Dorsolateral prefrontal cortex (tissue), 120 donors: ENCODE measurements at regions of chr15 and their contacts with region 1.

Region 1: DNA sequence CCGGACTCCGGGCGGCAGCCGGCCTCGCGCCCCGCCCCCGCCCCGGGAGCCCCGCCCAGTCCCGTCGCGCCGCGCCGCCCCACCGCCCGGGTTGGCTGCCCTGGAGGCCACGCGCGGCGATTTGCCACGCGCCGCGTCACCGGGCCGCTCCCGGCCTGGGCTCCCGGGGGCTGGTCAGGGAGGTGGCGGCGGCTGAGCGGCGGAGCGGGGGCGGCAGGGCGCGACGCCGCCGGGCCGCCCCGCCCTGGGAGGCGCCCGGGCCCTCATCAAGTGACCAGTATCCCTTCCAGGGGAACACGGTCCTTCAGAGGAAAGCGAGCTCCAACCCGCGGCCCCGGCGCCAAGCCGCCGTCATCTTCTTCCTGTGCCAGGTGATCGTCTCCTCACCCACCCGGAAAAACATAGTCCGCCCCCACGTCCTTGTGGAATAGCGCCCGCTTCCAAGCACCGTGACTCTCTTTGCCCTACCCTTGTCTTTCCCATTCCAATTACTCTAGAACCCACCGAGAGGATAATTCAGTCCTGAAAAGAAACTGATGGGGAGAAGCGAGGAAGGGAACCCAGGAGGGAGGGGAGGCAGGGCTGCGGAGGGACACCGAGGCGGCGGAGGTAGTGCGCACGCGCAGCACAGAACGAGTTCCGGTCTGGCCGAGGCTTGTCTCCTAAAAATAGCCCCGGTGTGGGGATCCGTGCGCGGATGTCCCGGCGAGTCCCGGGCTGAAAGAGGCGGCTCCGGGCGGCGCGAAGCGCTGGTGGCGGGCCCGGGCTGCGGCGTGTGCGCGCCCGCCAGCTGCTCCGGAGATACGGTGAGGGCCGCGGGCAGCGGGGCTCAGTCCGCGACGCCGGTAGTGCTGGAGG is at the start of gene MEF2A:
- DNase-seq: peak; percentile 85 to 93 (median 91)
- H3K4me3 ChIP-seq: peak within 1 kb of the TSS; percentile 49 to 95 (median 84)
- H3K27ac ChIP-seq: peak within 1 kb of the TSS; percentile 93 to 100 (median 99)
- H3K27me3 ChIP-seq: no peaks in the 10 kb centered on the region
- CTCF ChIP-seq: peak in 4 of 56 donors; percentile 10 to 19 (median 12)
- total RNA-seq, gene MEF2A: 54.3 to 131 (median 97.1) TPM

Region 2: GRCh38 chr15:99104788-99105513 is 460.6 kb before region 1 on chr15 and contains the start of gene SYNM:
- intact Hi-C with region 1: loop called in 1 of 2 experiments (anchors 10 kb)
- DNase-seq: peak; percentile 20 to 90 (median 73)
- H3K4me3 ChIP-seq: peak within 1 kb of the TSS; percentile 53 to 83 (median 74)
- H3K27ac ChIP-seq: peak within 1 kb of the TSS in 57 of 59 donors; percentile 41 to 97 (median 86)
- H3K27me3 ChIP-seq: no peaks in the 10 kb centered on the region
- CTCF ChIP-seq: peak; percentile 50 to 98 (median 86)
- total RNA-seq, gene SYNM: 54.7 to 162 (median 78.7) TPM

Region 3: GRCh38 chr15:99414755-99415731 is 150.5 kb before region 1 on chr15:
- intact Hi-C with region 1: loop called in 1 of 2 experiments (anchors 2 kb)
- DNase-seq: peak in 7 of 10 donors; percentile 30 to 84 (median 61)
- H3K4me3 ChIP-seq: no peak overlapping the region
- H3K27ac ChIP-seq: peak overlapping the region in 48 of 59 donors; percentile 6 to 83 (median 64)
- H3K27me3 ChIP-seq: no peaks in the 10 kb centered on the region
- CTCF ChIP-seq: no peak

Region 4: DNA sequence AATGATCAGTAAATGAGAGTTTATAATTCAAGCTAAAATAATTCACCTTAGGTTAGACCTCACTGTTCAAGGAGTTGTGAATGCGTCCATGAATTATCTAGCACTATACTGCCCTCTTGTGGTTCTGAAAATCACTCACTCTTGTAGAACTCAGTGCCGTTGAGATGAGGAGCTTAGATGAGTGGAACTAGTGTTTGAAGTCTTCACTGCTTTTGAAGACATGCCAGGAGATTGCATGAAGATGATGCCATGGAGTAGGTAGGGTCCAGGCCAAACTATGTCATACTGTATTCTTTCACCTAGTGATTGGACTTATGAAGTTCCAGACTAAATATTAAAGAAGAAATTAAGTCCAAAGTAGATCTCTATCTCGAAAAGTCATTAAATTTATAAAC is 138.9 kb after region 1 on chr15:
- intact Hi-C with region 1: loop called (anchors 2 to 5 kb)
- DNase-seq: peak in 1 of 10 donors; percentile 46
- H3K4me3 ChIP-seq: peak overlapping the region in 17 of 59 donors; percentile 2 to 51 (median 22)
- H3K27ac ChIP-seq: peak overlapping the region in 53 of 59 donors; percentile 13 to 93 (median 81)
- H3K27me3 ChIP-seq: no peaks in the 10 kb centered on the region
- CTCF ChIP-seq: peak; percentile 78 to 95 (median 88)